AG04450 (cell line): ENCODE measurements at regions of chr6 and their contacts with region 1.

Region 1: DNA sequence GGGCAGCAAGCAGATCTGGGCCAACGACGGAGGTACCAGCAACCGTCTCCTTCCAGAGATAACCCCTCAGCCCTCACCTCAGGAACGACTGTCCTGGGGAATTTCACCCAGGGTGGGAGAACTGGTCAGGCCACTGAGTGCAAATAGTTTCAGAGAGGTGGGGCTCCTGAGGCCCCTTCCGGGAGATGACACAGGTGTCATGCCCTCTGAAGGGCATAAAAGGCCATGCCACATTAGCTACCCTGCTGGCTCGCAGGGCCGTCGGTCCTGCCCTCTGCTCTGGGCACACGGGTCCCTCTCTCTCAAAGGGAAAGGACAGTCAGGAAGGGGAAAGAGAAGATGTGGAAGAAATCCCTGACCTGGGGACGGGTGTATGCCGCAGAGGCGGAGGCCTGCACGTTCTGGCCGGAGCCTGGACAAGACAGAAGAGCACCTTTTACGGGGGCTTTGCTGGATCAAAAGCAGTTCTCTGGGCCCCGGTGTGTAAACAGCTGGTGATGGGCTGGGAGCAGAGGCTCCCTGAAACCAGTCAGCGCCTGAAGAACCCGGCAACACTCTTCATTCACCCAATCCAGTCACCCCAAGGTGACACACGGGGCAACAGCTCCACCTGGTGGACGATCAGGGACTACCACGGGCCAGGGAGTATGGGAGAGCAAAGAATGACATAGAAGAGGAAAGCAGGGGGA is 6.4 kb upstream of the TAF8 start:
- DNase-seq: no peak
- H3K4me3 ChIP-seq: no peak overlapping the region
- H3K27ac ChIP-seq: no peak overlapping the region
- H3K27me3 ChIP-seq: no peaks in the 10 kb centered on the region
- CTCF ChIP-seq: peak; percentile 99

Region 2: GRCh38 chr6:41780546-41781427 is 263.1 kb before region 1 on chr6 and contains the start of gene PRICKLE4:
- CTCF ChIA-PET with region 1: interaction called, 65 read pairs
- POLR2A ChIA-PET with region 1: no interaction called
- DNase-seq: no peak
- H3K4me3 ChIP-seq: peak within 1 kb of the TSS; percentile 78
- H3K27ac ChIP-seq: no peak within 1 kb of the TSS
- H3K27me3 ChIP-seq: no peaks in the 10 kb centered on the region
- CTCF ChIP-seq: no peak
- polyA plus RNA-seq, gene PRICKLE4: 0.12 TPM in 1 of 2 replicates, not detected in the other

Region 3: DNA sequence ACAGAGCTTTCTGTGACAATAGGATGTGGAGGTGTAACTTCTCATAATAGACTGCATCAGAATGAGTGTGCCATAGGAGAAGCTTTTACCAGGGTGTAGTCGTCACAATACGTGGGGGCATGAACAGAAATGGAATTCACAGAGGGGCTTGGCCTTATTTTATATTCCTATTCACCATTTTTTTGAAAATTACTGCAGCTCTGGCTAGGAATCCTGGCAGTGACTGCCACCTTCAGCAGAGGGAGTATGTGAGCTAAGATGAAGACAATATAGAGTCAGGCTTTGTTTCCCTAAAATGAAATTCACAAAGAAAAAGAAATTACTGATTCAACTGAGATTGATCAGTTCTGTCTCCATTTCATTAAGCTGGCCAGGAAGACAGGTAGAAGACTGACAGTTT is 242.6 kb before region 1 on chr6:
- CTCF ChIA-PET with region 1: interaction called, 96 read pairs
- POLR2A ChIA-PET with region 1: no interaction called
- DNase-seq: no peak
- H3K4me3 ChIP-seq: no peak overlapping the region
- H3K27ac ChIP-seq: no peak overlapping the region
- H3K27me3 ChIP-seq: no peaks in the 10 kb centered on the region
- CTCF ChIP-seq: peak; percentile 81

Region 4: GRCh38 chr6:41846666-41847237 is 197.2 kb before region 1 on chr6:
- CTCF ChIA-PET with region 1: interaction called, 60 read pairs
- POLR2A ChIA-PET with region 1: no interaction called
- DNase-seq: peak; percentile 84
- H3K4me3 ChIP-seq: no peak overlapping the region
- H3K27ac ChIP-seq: peak overlapping the region; percentile 73
- H3K27me3 ChIP-seq: no peaks in the 10 kb centered on the region
- CTCF ChIP-seq: peak; percentile 92

Region 5: DNA sequence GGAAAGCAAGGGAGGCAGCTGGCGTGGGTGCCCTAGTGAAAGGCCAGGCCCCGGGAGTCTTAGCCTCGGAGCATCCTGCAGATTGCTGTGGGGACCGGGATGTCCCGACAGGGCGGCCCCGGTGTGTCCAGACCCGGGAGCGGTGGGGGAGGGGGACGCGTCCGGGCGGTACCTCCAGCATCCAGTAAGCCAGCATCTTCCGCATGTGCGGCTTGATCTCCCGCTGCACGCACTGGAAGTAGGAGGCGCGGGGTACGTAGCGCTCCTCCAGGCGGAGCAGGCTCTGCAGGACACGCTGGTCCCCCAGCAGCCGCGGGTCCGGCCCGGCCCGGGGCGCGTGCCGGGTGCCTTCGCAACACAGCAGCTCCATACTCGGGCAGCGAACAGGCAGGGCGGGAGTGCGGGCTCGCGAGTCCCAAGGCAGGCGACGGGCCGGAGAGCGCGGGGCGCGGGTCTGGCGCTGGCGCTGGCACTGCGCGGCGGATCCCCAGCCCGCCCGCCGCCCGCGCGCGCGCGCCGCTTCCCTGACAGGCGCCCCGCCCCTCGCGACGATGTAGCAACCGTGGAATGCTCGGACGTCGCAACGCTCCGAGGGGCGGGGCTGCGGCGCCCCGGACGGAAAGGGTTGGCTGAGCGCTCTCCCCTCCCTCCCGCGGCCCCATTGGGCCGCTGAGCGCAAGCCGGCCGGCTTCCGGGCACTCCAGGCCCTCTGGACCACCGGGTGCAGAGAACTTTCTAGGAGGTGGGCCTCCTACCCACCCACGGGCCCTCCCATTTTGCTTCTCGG is 102.5 kb before region 1 on chr6 and contains the start of gene CCND3:
- CTCF ChIA-PET with region 1: interaction called, 145 read pairs
- POLR2A ChIA-PET with region 1: interaction called, 6 read pairs
- DNase-seq: peak; percentile 75
- H3K4me3 ChIP-seq: peak within 1 kb of the TSS; percentile 98
- H3K27ac ChIP-seq: peak within 1 kb of the TSS; percentile 57
- H3K27me3 ChIP-seq: no peaks in the 10 kb centered on the region
- CTCF ChIP-seq: no peak
- polyA plus RNA-seq, gene CCND3: 25.8 and 30.9 TPM in 2 replicates